ENCODE measurements at regions of chr12 and their contacts with region 1.

Region 1: DNA sequence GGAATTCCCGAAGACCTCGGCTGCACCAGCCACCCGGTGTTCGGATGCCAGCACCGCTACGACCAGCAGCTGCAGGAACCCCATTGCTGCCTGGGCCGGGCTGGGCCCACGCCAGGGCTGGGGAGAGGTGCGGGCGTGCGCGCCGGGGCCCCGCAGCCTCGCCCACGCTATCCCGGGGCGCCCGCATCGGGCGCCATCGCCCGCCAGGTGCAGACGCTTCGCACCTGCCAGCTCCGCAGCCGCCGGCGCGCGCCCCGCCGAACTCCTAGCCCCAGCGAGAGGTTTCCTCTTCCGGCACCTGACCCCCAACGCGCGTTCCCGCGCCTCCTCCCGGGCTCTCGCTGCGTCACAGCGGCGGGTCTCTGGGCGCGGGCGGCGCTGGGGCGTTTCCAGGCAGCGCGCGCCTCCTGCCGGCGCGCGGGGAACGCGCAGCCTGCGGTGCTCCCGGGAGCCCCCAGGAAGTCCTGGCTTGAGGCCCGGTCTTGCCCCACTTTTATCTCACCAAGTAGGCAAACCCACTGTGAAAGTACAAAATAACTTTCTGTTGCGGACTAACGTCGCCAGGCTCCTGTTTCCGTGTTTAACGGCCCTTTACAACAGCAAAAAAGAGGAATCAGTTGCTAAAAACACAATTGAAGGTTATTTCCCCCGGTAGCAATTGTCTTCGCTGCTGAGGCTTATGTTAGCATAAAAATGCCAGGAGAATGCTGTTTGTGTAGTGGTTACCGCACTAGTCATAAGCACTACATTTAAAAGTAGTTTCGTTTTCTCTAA is at the start of gene TM7SF3:
- DNase-seq: peak; percentile 94
- H3K4me3 Mint-ChIP-seq: peak within 1 kb of the TSS; percentile 91
- H3K27ac Mint-ChIP-seq: peak within 1 kb of the TSS; percentile 90
- H3K4me1 Mint-ChIP-seq: peaks cover 61% of the 10 kb centered on the region
- H3K27me3 Mint-ChIP-seq: peaks cover 2% of the 10 kb centered on the region
- total RNA-seq, gene TM7SF3: 43.5 and 47.0 TPM in 2 replicates

Region 2: GRCh38 chr12:26832822-26833742 is 181.2 kb before region 1 on chr12 and contains the start of gene ITPR2:
- intact Hi-C with region 1: loop called (anchors 1 kb)
- DNase-seq: peak; percentile 89
- H3K4me3 Mint-ChIP-seq: peak within 1 kb of the TSS; percentile 99
- H3K27ac Mint-ChIP-seq: peak within 1 kb of the TSS; percentile 98
- H3K4me1 Mint-ChIP-seq: peaks cover 42% of the 10 kb centered on the region
- H3K27me3 Mint-ChIP-seq: peaks cover 5% of the 10 kb centered on the region
- total RNA-seq, gene ITPR2: 33.0 and 34.2 TPM in 2 replicates

Region 3: DNA sequence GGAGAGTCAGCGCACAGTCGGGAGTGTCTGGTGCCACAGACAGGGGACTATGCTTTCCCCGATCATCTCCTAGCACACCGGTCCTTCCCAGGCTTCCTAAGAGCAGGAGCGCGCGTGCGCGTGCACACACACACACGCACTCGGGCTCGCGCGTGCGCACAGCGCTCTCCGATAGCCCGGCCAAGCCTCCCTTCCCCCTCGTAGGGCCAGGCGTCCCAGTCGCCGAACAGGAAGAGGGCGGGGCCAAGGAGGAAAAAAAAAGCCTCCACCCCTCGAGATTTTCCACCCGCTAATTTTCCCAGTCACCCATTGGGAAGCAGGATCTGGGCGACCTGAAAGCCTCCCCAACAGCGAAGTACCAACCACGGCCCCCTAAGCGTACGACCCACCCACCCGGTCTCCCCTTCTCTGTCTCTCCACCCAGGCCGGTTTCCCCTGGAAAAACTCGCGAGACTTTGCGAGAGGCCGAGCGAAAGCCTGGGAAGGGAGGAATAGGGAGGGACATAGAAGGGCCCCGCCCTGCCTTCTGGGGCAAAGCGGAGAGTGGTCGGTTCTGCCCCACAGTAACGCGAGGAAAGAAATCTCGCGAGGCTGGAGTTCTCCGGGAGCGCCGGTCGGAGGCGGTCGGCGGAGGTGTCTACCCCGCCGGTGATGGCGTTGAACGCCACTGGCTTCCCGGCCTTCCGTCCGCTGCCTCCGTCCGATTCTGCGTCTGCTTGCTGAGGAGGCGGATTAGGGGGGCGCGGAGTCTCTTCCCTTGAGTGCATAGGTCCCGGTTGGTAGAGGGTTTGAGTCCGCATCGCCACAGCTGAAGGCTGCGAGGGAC is 76.2 kb before region 1 on chr12 and contains the starts of genes FGFR1OP2 and INTS13:
- intact Hi-C with region 1: loop called (anchors 1 kb)
- DNase-seq: peak; percentile 97
- H3K4me3 Mint-ChIP-seq: peak within 1 kb of the TSS; percentile 96
- H3K27ac Mint-ChIP-seq: peak within 1 kb of the TSS; percentile 96
- H3K4me1 Mint-ChIP-seq: peaks cover 82% of the 10 kb centered on the region
- H3K27me3 Mint-ChIP-seq: no peaks in the 10 kb centered on the region
- total RNA-seq, gene FGFR1OP2: 48.3 and 49.9 TPM in 2 replicates
- total RNA-seq, gene INTS13: 43.8 and 52.2 TPM in 2 replicates

Region 4: DNA sequence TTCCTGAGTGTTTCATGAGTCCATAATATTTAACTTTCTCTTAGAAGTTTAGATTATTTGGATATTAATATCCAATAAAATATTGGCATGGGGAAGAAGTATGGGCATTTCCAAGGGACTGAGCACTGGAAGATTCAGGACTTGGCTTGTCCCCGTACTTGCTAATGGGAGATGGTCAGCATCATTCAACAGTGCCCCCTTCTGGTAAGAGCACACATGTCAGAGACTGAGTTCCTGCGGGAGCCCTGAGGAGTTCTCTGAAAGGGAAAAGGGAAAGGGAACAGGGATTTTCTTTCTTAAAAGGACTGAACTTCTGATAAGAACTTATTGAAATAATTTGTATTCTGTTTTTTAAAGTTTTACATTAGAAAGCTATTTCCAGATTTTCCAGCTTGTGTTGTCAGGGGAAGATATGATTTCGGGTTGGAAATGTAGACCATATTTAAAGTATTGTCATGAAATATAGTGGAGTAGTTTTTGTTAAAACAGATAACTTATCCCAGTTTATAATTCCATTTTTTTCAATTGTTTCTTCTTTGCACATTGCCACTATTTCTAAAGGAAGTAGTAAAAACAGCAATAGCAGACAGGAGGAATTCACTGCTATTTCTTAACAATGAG is 127.9 kb after region 1 on chr12:
- intact Hi-C with region 1: loop called (anchors 2 kb)
- DNase-seq: peak; percentile 16
- H3K4me3 Mint-ChIP-seq: no peak overlapping the region
- H3K27ac Mint-ChIP-seq: no peak overlapping the region
- H3K4me1 Mint-ChIP-seq: peaks cover 31% of the 10 kb centered on the region
- H3K27me3 Mint-ChIP-seq: no peaks in the 10 kb centered on the region

Region 5: GRCh38 chr12:27523642-27524493 is 509.6 kb after region 1 on chr12 and contains the start of gene PPFIBP1:
- intact Hi-C with region 1: loop called (anchors 5 kb)
- DNase-seq: peak; percentile 83
- H3K4me3 Mint-ChIP-seq: peak within 1 kb of the TSS; percentile 89
- H3K27ac Mint-ChIP-seq: peak within 1 kb of the TSS; percentile 90
- H3K4me1 Mint-ChIP-seq: peaks cover 56% of the 10 kb centered on the region
- H3K27me3 Mint-ChIP-seq: peaks cover 19% of the 10 kb centered on the region
- total RNA-seq, gene PPFIBP1: 53.8 and 55.7 TPM in 2 replicates